Heart right ventricle (tissue), 16 donors: ENCODE measurements at regions of chr15 and their contacts with region 1.

Region 1: DNA sequence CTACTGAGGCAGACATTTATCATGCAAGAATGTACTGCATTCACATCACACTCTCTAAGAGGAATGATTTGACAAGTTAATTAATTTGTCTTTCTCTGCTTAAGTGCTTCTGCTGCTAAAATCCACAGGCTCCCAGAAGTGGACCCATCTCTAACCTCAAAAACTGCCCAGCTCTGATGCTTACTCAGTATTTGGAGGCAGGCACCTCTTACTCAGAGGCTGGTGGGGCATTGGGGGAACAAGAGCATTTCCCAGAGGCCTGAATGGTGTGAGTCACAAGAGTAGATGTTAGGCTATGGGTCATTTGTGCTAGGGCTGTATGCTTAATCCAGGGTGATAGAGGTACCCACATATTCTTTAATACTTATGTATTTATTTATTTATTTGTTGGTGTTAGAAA is 34.4 kb upstream of the HCN4 start:
- DNase-seq: no peak
- ATAC-seq: no peak
- H3K4me3 ChIP-seq: no peak overlapping the region
- H3K27ac ChIP-seq: no peak overlapping the region
- H3K4me1 ChIP-seq: peaks cover 0 to 6% (median 0%) of the 10 kb centered on the region in 9 donors
- H3K27me3 ChIP-seq: peaks cover 0 to 29% (median 0%) of the 10 kb centered on the region in 7 donors
- CTCF ChIP-seq: no peak

Region 2: DNA sequence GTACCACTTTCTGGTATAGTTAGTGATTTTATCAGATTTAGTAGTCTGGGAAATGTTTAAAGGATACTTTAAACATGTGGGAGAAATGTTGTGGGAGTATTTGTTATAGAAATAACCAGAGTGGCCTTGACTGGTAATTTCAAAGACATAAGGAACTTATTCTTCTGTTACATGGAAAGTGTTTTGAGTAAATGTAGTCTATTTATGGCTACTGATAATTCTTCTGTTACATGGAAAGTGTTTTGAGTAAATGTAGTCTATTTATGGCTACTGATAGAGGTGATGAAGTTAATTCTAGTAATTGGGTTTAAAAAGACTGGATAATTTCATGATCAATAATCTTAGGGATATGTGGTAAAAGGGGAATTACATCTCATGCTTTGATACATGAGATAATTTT is 57.5 kb after region 1 on chr15:
- intact Hi-C with region 1: loop called in 1 of 10 experiments (anchors 2 kb)
- DNase-seq: no peak
- ATAC-seq: no peak
- H3K4me3 ChIP-seq: no peak overlapping the region
- H3K27ac ChIP-seq: no peak overlapping the region
- H3K4me1 ChIP-seq: peaks cover 0 to 8% (median 0%) of the 10 kb centered on the region in 9 donors
- H3K27me3 ChIP-seq: peaks cover 0 to 7% (median 0%) of the 10 kb centered on the region in 7 donors
- CTCF ChIP-seq: no peak

Region 3: GRCh38 chr15:73504885-73505284 is 101.7 kb after region 1 on chr15:
- intact Hi-C with region 1: loop called in 1 of 10 experiments (anchors 10 kb)
- DNase-seq: no peak
- ATAC-seq: no peak
- H3K4me3 ChIP-seq: no peak overlapping the region
- H3K27ac ChIP-seq: no peak overlapping the region
- H3K4me1 ChIP-seq: no peaks in the 10 kb centered on the region
- H3K27me3 ChIP-seq: peaks cover 0 to 12% (median 0%) of the 10 kb centered on the region in 7 donors
- CTCF ChIP-seq: no peak